ENCODE measurements at regions of chr12 and their contacts with region 1.

Region 1: DNA sequence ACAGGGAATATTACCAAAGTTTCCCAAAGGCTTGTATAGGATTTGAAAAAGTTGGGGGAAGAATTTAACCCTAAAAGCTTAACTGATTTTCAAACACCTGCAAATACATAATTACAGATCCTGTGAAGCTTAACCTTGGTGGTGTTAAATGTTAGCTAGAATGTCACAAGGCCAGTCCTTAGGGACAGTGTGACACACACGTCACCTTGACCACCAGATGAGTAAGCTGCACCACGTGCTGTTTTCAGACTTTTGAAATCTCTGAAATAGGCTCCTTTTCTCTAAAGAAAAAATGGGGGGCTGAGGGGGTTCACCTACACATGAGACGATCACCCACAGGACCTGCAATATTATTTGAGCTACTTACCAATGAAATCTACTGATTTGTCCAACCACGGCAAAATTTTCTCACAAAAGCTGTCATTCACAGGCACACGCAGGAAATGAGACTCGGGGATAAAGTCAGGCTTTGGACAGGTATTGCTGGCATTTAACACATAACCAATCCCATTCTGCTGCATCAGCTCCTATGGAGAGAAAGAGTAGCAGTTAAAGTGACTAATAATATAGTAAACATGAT is 75.9 kb downstream of the DUSP16 start:
- DNase-seq: no peak
- ATAC-seq: no peak
- H3K4me3 ChIP-seq: no peak overlapping the region
- H3K4me3 Mint-ChIP-seq: no peak overlapping the region
- H3K27ac ChIP-seq: no peak overlapping the region
- H3K27ac Mint-ChIP-seq: peak overlapping the region in 6 of 9 donors; percentile 48 to 83 (median 68)
- H3K4me1 ChIP-seq: peaks cover 15 to 16% of the 10 kb centered on the region in 2 donors
- H3K4me1 Mint-ChIP-seq: peaks cover 12 to 43% (median 37%) of the 10 kb centered on the region in 7 donors
- H3K27me3 ChIP-seq: no peaks in the 10 kb centered on the region
- H3K27me3 Mint-ChIP-seq: no peaks in the 10 kb centered on the region

Region 2: GRCh38 chr12:12467688-12468261 is 19.0 kb before region 1 on chr12:
- CTCF ChIA-PET with region 1: interaction called, 3 read pairs
- POLR2A ChIA-PET with region 1: interaction called, 48 read pairs
- intact Hi-C with region 1: loop called (anchors 1 to 2 kb)
- DNase-seq: peak in 3 of 9 donors; percentile 15 to 37 (median 35)
- ATAC-seq: peak; percentile 38
- H3K4me3 ChIP-seq: no peak overlapping the region
- H3K4me3 Mint-ChIP-seq: peak overlapping the region in 9 of 10 donors; percentile 16 to 70 (median 50)
- H3K27ac ChIP-seq: peak overlapping the region; percentile 75
- H3K27ac Mint-ChIP-seq: peak overlapping the region; percentile 89 to 99 (median 96)
- H3K4me1 ChIP-seq: peaks cover 29 to 39% of the 10 kb centered on the region in 2 donors
- H3K4me1 Mint-ChIP-seq: peaks cover 19 to 63% (median 52%) of the 10 kb centered on the region in 7 donors
- H3K27me3 ChIP-seq: no peaks in the 10 kb centered on the region
- H3K27me3 Mint-ChIP-seq: no peaks in the 10 kb centered on the region

Region 3: GRCh38 chr12:12505544-12506495 is 19.1 kb after region 1 on chr12:
- CTCF ChIA-PET with region 1: no interaction called
- POLR2A ChIA-PET with region 1: no interaction called
- intact Hi-C with region 1: loop called in 1 of 2 experiments (anchors 2 kb)
- DNase-seq: no peak
- ATAC-seq: no peak
- H3K4me3 ChIP-seq: no peak overlapping the region
- H3K4me3 Mint-ChIP-seq: peak overlapping the region in 5 of 10 donors; percentile 5 to 58 (median 38)
- H3K27ac ChIP-seq: no peak overlapping the region
- H3K27ac Mint-ChIP-seq: peak overlapping the region in 7 of 9 donors; percentile 6 to 83 (median 70)
- H3K4me1 ChIP-seq: peaks cover 3 to 5% of the 10 kb centered on the region in 2 donors
- H3K4me1 Mint-ChIP-seq: peaks cover 11 to 66% (median 38%) of the 10 kb centered on the region in 7 donors
- H3K27me3 ChIP-seq: no peaks in the 10 kb centered on the region
- H3K27me3 Mint-ChIP-seq: no peaks in the 10 kb centered on the region

Region 4: DNA sequence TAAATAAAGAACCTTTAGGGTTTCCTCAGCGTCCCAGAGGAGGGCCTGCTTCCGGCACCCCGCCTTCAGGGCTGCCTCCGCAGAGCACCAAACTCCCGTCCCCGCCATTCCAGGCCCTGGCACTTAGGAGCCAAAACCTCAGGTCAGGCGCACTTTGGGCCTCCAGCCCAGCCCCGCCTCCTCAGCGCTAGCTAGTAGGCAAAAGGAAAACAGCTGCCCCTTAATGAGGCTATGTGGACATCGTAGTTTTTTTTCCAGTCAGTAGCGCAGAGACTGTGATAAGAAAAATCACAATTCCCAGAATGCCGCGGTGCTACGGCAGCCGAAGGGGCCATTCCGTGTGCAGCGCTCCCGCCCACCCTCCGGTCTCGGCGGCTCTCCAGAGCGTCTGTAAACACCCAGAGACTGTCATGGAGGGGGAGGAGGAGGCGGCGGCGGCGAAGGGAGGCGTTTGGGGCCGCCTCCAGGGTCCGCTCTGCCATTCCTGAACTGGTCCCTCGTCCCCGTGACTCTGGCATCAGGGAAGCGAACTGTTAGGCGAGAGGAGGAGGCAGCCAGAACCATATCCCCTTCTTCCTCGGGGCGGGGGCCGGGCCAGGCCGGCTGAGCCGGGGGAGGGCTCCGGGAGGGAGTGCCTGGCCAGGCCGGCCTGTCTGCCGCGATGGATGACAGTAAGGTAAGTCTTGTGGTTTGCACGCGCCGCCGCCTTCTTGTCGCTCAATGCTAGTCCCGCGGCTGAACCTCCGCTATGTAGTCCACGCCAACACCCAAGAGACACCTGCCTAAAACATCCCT is 125.0 kb after region 1 on chr12 and contains the start of gene CREBL2:
- CTCF ChIA-PET with region 1: no interaction called
- POLR2A ChIA-PET with region 1: interaction called, 7 read pairs
- intact Hi-C with region 1: loop called (anchors 2 to 5 kb)
- DNase-seq: peak; percentile 61 to 91 (median 89)
- ATAC-seq: peak; percentile 97
- H3K4me3 ChIP-seq: peak within 1 kb of the TSS; percentile 94
- H3K4me3 Mint-ChIP-seq: peak within 1 kb of the TSS; percentile 84 to 99 (median 93)
- H3K27ac ChIP-seq: peak within 1 kb of the TSS; percentile 98
- H3K27ac Mint-ChIP-seq: peak within 1 kb of the TSS; percentile 91 to 100 (median 99)
- H3K4me1 ChIP-seq: peaks cover 12 to 18% of the 10 kb centered on the region in 2 donors
- H3K4me1 Mint-ChIP-seq: peaks cover 38 to 74% (median 57%) of the 10 kb centered on the region in 7 donors
- H3K27me3 ChIP-seq: no peaks in the 10 kb centered on the region
- H3K27me3 Mint-ChIP-seq: no peaks in the 10 kb centered on the region
- total RNA-seq, gene CREBL2: 17.3 to 39.5 (median 24.9) TPM

Region 5: DNA sequence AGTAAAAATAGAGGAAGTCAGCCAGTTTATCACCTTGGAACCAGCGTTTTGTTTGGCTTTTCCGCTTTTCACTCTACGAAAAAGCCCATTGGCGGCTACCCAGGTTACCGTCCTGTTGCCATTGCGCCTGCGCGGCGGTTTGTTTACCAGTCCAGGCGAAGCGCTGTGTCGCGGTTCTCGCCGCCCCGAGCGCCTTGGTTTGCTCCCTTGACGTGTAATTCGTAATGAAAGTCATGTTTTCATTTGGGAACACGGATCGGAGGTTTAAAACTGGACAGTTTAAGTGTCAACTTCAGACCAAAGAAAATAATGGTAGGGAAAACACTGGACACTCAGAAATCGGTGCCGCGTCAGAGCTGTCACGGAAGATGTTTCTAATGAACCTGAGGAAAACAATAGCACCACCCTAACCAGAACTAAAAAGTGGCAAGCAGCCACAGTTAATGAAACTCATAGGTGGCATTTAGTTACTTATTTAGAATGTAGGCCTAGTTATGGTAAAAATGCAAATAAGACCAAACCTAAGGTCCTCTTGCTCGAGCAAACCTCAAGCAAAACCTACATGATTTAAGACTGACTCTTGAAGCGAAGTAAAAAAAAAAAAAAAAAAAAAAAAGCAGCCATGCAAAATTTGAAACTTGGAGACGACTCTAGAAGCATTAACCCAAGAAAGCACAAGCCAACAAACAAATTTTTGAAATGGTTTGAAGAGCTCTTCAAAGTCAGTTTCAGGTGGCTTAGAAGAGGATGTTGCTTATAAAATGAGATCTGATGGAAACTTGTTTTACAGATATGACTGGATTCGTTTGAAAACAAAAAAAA is 210.0 kb after region 1 on chr12:
- CTCF ChIA-PET with region 1: no interaction called
- POLR2A ChIA-PET with region 1: interaction called, 9 read pairs
- intact Hi-C with region 1: loop called (anchors 1 to 2 kb)
- DNase-seq: peak; percentile 86 to 97 (median 92)
- ATAC-seq: peak; percentile 92
- H3K4me3 ChIP-seq: peak overlapping the region; percentile 63
- H3K4me3 Mint-ChIP-seq: peak overlapping the region; percentile 79 to 99 (median 95)
- H3K27ac ChIP-seq: peak overlapping the region; percentile 93
- H3K27ac Mint-ChIP-seq: peak overlapping the region; percentile 95 to 100 (median 100)
- H3K4me1 ChIP-seq: peaks cover 11 to 16% of the 10 kb centered on the region in 2 donors
- H3K4me1 Mint-ChIP-seq: peaks cover 24 to 63% (median 33%) of the 10 kb centered on the region in 7 donors
- H3K27me3 ChIP-seq: no peaks in the 10 kb centered on the region
- H3K27me3 Mint-ChIP-seq: no peaks in the 10 kb centered on the region

Region 6: DNA sequence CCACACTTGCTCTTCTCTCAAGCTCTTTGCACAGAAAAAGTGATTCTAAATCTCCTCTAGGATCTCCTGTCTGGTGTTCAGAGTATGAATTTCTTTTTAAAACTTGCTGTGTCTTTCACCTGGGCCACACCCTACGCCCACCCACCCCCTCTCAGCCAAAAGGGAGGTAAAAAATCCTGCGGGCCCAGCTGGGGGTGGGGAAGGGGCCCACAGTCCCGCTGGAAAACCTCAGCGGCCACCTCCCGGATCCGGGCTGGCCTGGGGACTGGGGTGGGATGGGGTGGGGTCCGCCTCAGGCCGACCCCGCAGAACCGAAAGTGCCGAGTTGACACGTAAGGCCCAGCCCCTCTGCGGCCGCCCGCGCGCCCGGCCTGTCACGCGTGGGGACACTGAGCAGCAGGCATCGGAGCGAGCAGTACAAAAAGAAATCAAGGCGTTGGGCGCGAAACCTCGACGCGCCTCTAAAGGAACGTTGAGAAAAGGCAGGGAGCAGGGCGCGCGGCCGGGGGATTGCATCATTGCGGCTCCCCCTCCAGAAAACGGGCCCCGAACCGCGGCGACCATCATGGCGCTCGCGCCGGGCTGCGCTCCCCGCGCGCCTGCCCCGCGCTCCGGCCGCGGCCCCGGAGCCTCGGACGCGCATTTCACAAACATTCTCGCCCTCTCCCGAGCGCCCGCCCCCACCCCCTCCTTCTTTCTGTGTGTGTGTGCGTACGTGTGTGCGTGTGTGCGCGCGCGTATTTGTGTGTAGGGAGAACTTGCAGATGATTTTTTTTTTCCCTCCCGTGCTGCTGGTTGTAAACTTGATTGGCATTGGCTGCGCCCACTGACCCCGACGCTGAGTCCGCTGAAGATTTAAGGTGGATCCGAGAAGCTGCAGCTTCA is 238.2 kb after region 1 on chr12:
- CTCF ChIA-PET with region 1: interaction called, 4 read pairs
- POLR2A ChIA-PET with region 1: interaction called, 4 read pairs
- intact Hi-C with region 1: loop called in 1 of 2 experiments (anchors 1 kb)
- DNase-seq: peak; percentile 78 to 97 (median 92)
- ATAC-seq: peak; percentile 77
- H3K4me3 ChIP-seq: peak overlapping the region; percentile 53
- H3K4me3 Mint-ChIP-seq: peak overlapping the region; percentile 87 to 98 (median 94)
- H3K27ac ChIP-seq: peak overlapping the region; percentile 99
- H3K27ac Mint-ChIP-seq: peak overlapping the region; percentile 96 to 99 (median 97)
- H3K4me1 ChIP-seq: peaks cover 28% of the 10 kb centered on the region in 2 donors
- H3K4me1 Mint-ChIP-seq: peaks cover 23 to 64% (median 56%) of the 10 kb centered on the region in 7 donors
- H3K27me3 ChIP-seq: no peaks in the 10 kb centered on the region
- H3K27me3 Mint-ChIP-seq: peaks cover 0 to 7% (median 0%) of the 10 kb centered on the region in 5 donors